ENCODE measurements at regions of chr1 and their contacts with region 1.

Region 1: DNA sequence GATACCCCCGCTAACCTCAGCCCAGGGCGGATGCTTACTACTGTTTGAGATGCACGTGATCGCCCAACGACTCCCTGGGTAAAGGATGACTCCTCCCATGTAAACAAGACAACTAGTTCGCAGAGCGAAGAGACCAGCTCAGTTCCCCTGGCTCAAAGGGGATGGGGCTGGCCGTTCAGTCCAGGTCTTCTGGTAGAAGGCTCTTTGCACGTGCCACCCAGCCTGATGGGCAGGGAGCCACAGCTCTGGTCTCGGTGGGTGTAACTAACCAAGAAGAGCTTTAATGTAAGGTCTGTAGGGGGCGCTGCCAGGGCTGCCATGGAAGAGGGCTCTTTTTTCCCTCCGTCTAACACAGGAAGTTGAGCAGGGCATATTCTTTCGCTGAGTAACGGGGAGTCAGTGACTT is 49.4 kb upstream of the PARP1 start:
- DNase-seq: peak; percentile 48 to 72 (median 65)
- H3K4me3 ChIP-seq: peak overlapping the region; percentile 19
- H3K4me3 Mint-ChIP-seq: peak overlapping the region; percentile 67 to 94 (median 89)
- H3K27ac ChIP-seq: no peak overlapping the region
- H3K27ac Mint-ChIP-seq: peak overlapping the region; percentile 57 to 95 (median 90)
- H3K4me1 ChIP-seq: peaks cover 8% of the 10 kb centered on the region
- H3K4me1 Mint-ChIP-seq: peaks cover 15 to 21% (median 17%) of the 10 kb centered on the region in 3 donors
- H3K27me3 ChIP-seq: no peaks in the 10 kb centered on the region
- H3K27me3 Mint-ChIP-seq: peaks cover 0 to 3% of the 10 kb centered on the region in 2 donors

Region 2: DNA sequence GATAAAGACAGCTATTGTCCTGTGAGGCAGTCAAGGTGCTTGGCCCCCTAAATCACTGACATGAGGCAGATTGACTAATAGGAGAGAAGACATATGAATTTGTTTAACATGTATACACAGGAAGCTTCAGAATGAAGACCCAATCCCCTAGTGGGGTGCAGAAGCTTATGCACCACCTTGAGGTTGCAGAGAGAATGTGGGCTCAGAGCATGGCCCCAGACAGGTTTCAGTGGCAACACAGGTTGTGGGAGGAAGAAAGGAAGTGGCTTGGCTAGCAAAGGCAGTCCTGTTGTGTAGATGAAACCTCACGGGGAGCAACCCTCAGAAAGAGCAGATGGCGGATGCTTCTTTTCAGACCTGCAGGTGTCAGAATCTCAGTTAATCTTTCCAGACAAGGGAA is 12.4 kb before region 1 on chr1:
- CTCF ChIA-PET with region 1: interaction called, 26 read pairs
- POLR2A ChIA-PET with region 1: interaction called, 5 read pairs
- DNase-seq: peak; percentile 27 to 85 (median 78)
- H3K4me3 ChIP-seq: no peak overlapping the region
- H3K4me3 Mint-ChIP-seq: peak overlapping the region in 6 of 7 donors; percentile 2 to 84 (median 60)
- H3K27ac ChIP-seq: no peak overlapping the region
- H3K27ac Mint-ChIP-seq: peak overlapping the region; percentile 5 to 94 (median 88)
- H3K4me1 ChIP-seq: peaks cover 33% of the 10 kb centered on the region
- H3K4me1 Mint-ChIP-seq: peaks cover 26 to 33% (median 29%) of the 10 kb centered on the region in 3 donors
- H3K27me3 ChIP-seq: no peaks in the 10 kb centered on the region
- H3K27me3 Mint-ChIP-seq: no peaks in the 10 kb centered on the region

Region 3: GRCh38 chr1:226476648-226477319 is 19.5 kb after region 1 on chr1:
- CTCF ChIA-PET with region 1: no interaction called
- POLR2A ChIA-PET with region 1: no interaction called
- DNase-seq: no peak
- H3K4me3 ChIP-seq: no peak overlapping the region
- H3K4me3 Mint-ChIP-seq: no peak overlapping the region
- H3K27ac ChIP-seq: no peak overlapping the region
- H3K27ac Mint-ChIP-seq: peak overlapping the region in 1 of 8 donors; percentile 16
- H3K4me1 ChIP-seq: no peaks in the 10 kb centered on the region
- H3K4me1 Mint-ChIP-seq: peaks cover 0 to 5% (median 3%) of the 10 kb centered on the region in 3 donors
- H3K27me3 ChIP-seq: no peaks in the 10 kb centered on the region
- H3K27me3 Mint-ChIP-seq: peaks cover 4 to 13% of the 10 kb centered on the region in 2 donors

Measured in CD8-positive, alpha-beta memory T cell (primary cell).